ENCODE measurements at regions of chr7 and their contacts with region 1.

Region 1: GRCh38 chr7:87797798-87798403 is 78.3 kb downstream of the SLC25A40 start:
- DNase-seq: peak in 2 of 4 experiments; percentile 32 to 52
- ATAC-seq: peak; percentile 91
- H3K4me3 ChIP-seq: no peak overlapping the region
- H3K27ac ChIP-seq: no peak overlapping the region
- H3K4me1 ChIP-seq: no peaks in the 10 kb centered on the region
- H3K27me3 ChIP-seq: no peaks in the 10 kb centered on the region
- CTCF ChIP-seq: peak; percentile 52 to 79 (median 58); a peak in 5 of 6 replicates
- EP300 ChIP-seq: no peak
- POLR2A ChIP-seq: no peak
- RAD21 ChIP-seq: peak; percentile 81 to 92

Region 2: DNA sequence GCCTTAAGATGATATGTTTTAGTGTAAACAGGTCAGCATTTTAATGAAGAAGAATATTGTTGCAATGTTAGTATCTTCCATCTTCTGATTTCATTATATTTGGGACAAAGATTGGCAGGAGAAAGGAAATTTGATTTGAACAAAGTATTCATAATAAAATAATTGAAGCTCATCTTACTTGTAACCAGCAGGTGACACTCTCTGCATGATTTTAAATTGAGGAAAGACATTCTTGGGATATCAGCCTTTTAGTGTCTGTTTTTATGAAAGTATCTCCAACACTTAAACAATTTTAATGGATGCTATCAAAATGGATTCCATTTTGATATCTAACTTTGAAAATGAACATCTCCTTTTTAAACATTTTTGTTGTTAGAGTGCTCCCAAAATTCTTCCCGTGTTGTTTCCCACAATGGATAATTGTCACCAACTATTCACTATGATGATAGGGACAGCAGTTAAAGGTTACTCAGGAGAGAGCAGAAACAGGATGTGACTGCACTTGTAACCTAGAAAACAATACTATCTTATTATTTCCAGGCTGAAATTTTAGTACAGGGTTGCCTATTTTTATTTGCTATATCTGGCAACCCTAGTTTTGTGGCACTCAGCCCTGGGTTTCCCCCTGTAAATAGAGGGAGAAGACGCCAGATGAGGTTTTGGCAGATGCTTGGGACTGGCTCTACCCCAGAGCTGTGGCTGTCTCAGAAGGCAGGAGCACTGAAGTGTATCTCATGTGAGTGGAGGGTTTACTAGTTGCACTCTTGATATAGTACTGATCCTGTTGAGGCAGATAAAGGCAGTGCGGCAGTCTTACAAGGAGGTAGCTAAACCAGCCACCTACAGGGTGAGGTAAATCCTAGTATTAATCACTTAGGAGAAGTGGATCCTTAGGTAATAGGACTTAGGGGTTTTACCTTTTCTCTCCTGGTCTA is 291.4 kb before region 1 on chr7:
- CTCF ChIA-PET with region 1: no interaction called
- POLR2A ChIA-PET with region 1: no interaction called
- in situ Hi-C with region 1: no loop called
- intact Hi-C with region 1: loop called (anchors 10 kb)
- DNase-seq: peak in 1 of 4 experiments; percentile 16
- ATAC-seq: peak; percentile 41; the same call in 1 of the 3 replicates
- H3K4me3 ChIP-seq: no peak overlapping the region
- H3K27ac ChIP-seq: no peak overlapping the region
- H3K4me1 ChIP-seq: no peaks in the 10 kb centered on the region
- H3K27me3 ChIP-seq: no peaks in the 10 kb centered on the region
- CTCF ChIP-seq: peak in 2 of 3 experiments; percentile 14 to 60; a peak in 2 of 6 replicates
- EP300 ChIP-seq: no peak
- POLR2A ChIP-seq: no peak
- RAD21 ChIP-seq: peak; percentile 63 to 74

Region 3: DNA sequence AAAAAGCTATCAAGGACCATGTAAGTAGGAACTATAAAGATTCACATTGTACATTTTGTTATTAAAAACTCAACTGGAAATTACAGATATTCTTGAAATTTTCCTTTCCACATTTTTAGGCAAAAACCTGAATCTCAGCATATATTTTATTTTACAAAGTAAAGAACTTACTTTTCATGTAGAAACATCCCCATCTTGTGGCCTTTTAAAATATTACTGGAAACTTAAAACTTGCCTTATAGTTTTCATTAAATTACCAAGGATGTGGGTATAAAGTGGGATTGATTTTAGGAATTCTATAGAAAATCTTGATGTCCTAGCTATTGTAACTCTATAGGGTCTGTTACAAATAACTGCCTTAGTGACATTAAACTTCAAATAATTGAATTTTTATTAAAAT is 89.0 kb after region 1 on chr7:
- CTCF ChIA-PET with region 1: interaction called, 25 read pairs
- POLR2A ChIA-PET with region 1: no interaction called
- in situ Hi-C with region 1: loop called (anchors 5 kb)
- intact Hi-C with region 1: loop called (anchors 2 kb)
- DNase-seq: no peak
- ATAC-seq: 0 out of 3 replicates have a peak, but pooled peaks have one; percentile 33
- H3K4me3 ChIP-seq: no peak overlapping the region
- H3K27ac ChIP-seq: no peak overlapping the region
- H3K4me1 ChIP-seq: no peaks in the 10 kb centered on the region
- H3K27me3 ChIP-seq: no peaks in the 10 kb centered on the region
- CTCF ChIP-seq: peak in 2 of 3 experiments; percentile 20 to 50; a peak in 2 of 6 replicates
- EP300 ChIP-seq: no peak
- POLR2A ChIP-seq: no peak
- RAD21 ChIP-seq: peak; percentile 51 to 56

Region 4: DNA sequence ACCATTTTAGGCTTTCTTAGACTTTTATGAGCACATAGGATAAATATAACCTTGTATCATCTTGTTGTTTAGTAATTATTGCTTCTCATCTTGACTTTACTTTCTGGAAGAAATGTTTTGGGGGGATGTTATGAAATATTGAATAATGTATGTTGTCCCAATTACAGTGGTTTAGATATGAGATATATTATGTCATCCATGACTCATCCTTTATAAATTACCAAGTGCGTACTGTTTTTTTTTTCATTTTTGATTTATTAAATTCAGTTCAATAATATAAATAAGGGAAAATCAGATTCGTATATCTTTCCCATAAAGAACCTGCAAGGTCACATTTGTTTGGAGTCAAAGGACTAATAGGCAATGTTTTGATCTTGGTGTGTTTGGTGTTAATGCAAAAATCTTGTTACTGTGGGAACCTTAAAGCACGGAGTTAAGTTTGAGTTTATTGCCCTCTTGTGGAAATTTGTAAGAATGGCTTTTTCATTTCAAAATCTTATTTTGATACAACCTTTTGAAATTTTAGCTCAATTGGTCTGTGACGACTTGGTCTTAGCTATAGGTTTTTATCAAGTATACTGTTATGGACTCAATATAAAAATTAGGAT is 313.3 kb after region 1 on chr7:
- CTCF ChIA-PET with region 1: interaction called, 6 read pairs
- POLR2A ChIA-PET with region 1: no interaction called
- in situ Hi-C with region 1: loop called (anchors 25 kb)
- intact Hi-C with region 1: loop called (anchors 1 kb)
- DNase-seq: peak; percentile 25 to 39 (median 31)
- ATAC-seq: peak; percentile 73
- H3K4me3 ChIP-seq: no peak overlapping the region
- H3K27ac ChIP-seq: no peak overlapping the region
- H3K4me1 ChIP-seq: no peaks in the 10 kb centered on the region
- H3K27me3 ChIP-seq: no peaks in the 10 kb centered on the region
- CTCF ChIP-seq: peak; percentile 30 to 75 (median 48); a peak in 3 of 6 replicates
- EP300 ChIP-seq: no peak
- POLR2A ChIP-seq: no peak
- RAD21 ChIP-seq: peak; percentile 78 to 84

Region 5: DNA sequence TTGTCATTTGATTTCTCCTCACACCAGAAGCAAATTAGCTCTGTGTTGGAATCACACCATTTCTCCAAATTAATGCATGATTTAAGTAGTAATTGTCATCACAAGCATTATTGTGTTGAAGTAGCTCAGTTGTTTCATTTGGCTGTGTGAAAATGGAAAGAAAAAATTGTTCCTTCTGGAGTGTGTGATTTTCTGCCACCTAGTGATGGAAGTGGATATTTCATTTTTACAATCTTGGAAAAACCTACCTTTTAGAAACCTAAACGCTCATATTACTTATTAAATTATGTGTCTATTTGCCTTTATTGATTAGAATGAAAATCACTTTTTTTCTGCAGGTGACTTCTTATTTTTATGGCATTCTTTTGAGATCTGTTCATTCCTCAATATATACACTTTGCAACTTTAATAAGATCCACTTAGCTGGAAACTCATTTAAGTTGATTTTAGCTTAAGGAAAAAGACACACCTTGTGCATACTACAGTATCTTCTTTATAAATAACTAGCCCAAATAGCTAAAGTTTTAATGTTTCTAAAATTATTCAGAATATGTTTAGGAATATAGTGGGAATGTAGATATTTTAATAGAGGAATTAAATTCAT is 371.9 kb after region 1 on chr7:
- CTCF ChIA-PET with region 1: interaction called, 6 read pairs
- POLR2A ChIA-PET with region 1: no interaction called
- in situ Hi-C with region 1: no loop called
- intact Hi-C with region 1: loop called (anchors 2 kb)
- DNase-seq: peak in 3 of 4 experiments; percentile 9 to 28 (median 24)
- ATAC-seq: peak; percentile 62; the same call in 2 of the 3 replicates
- H3K4me3 ChIP-seq: no peak overlapping the region
- H3K27ac ChIP-seq: no peak overlapping the region
- H3K4me1 ChIP-seq: no peaks in the 10 kb centered on the region
- H3K27me3 ChIP-seq: no peaks in the 10 kb centered on the region; a peak in 1 of 5 replicates
- CTCF ChIP-seq: peak; percentile 20 to 63 (median 51); a peak in 4 of 6 replicates
- EP300 ChIP-seq: no peak
- POLR2A ChIP-seq: no peak
- RAD21 ChIP-seq: peak; percentile 39 to 59

Measured in K562 (cell line).